ENCODE measurements at regions of chr16 and their contacts with region 1.

Region 1: DNA sequence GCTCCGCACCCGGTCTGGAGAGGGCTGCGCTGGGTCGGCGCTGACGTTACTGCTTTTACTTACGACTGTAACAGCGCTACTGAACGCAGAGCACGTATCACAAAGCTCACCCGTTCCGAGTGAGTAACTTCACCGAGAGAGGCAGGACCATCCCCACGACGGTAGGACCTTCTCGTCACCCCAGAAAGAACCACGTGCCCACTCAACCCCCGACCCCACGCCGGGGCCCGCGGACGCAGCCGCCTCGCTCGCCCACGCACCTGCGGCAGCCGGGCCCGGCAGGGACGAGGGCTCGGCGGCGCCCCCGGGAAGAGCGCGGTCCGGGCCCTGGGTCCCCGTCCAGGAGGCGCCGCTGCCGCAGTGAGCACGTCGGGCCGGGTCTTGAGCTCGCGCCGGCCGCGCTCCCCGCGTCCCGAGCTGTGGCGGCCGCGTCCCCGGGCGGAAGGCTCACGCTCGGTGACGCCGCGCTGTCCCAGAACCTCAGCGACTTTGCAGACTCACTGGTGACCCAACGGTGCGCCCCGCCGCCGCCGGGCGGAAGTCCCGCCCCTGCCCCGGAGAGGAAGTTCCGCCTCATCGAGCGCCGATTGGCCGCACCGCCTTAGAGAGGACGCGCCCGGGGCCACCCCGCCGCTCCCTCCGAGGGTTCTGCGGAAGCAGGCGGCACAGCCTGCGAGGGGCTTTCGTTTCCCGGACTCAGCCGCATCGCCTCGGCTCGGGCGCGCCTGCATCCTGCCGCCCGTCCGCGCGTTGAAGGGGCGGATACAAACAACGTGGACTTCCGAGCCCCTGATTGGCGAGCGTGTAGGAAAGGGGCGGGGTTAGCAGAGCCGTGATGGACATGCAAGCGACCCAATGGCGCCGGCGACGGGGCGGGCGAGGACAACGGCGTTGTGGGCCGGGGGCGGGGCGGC is 865 bp upstream of the RAB40C start:
- DNase-seq: peak; percentile 73 to 100
- H3K4me3 ChIP-seq: peak overlapping the region; percentile 90 to 94 (median 91)
- H3K27ac ChIP-seq: peak overlapping the region; percentile 99
- H3K4me1 ChIP-seq: peaks cover 0 to 20% (median 11%) of the 10 kb centered on the region in 4 experiments; a peak in 6 of 7 replicates
- H3K27me3 ChIP-seq: peaks cover 0 to 45% (median 29%) of the 10 kb centered on the region in 4 experiments; a peak in 5 of 7 replicates
- CTCF ChIP-seq: no peak
- EP300 ChIP-seq: no peak
- POLR2A ChIP-seq: peak in 1 of 2 experiments; percentile 55; a peak in 2 of 3 replicates
- RAD21 ChIP-seq: no peak

Region 2: DNA sequence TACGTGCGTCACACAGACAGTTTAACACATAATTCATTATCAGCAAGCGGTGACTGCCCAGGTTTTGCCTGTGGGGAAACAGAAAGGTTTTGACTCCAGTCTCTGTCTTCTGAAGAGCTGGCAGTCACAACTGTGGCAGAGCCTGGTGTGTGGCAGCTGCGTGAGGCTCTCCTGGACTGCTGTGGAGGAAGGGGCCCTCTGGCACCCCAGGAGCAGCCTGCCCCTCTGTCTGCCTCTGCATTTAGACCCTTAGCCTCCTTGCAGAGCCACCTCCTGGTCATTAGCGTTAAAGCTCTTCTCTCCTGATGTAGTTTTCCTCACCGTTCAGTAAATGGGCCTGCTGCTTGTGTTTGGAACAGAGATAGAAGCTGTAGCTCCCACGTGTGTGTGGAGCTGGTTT is 11.8 kb after region 1 on chr16:
- CTCF ChIA-PET with region 1: interaction called, 35 read pairs
- POLR2A ChIA-PET with region 1: interaction called, 8 read pairs
- DNase-seq: no peak
- H3K4me3 ChIP-seq: no peak overlapping the region
- H3K27ac ChIP-seq: no peak overlapping the region
- H3K4me1 ChIP-seq: peaks cover 0 to 2% (median 0%) of the 10 kb centered on the region in 4 experiments; a peak in 1 of 7 replicates
- H3K27me3 ChIP-seq: no peaks in the 10 kb centered on the region; a peak in 2 of 7 replicates
- CTCF ChIP-seq: peak; percentile 20 to 67 (median 54)
- EP300 ChIP-seq: no peak
- POLR2A ChIP-seq: no peak
- RAD21 ChIP-seq: peak; percentile 25 to 48; a peak in 3 of 4 replicates

Region 3: DNA sequence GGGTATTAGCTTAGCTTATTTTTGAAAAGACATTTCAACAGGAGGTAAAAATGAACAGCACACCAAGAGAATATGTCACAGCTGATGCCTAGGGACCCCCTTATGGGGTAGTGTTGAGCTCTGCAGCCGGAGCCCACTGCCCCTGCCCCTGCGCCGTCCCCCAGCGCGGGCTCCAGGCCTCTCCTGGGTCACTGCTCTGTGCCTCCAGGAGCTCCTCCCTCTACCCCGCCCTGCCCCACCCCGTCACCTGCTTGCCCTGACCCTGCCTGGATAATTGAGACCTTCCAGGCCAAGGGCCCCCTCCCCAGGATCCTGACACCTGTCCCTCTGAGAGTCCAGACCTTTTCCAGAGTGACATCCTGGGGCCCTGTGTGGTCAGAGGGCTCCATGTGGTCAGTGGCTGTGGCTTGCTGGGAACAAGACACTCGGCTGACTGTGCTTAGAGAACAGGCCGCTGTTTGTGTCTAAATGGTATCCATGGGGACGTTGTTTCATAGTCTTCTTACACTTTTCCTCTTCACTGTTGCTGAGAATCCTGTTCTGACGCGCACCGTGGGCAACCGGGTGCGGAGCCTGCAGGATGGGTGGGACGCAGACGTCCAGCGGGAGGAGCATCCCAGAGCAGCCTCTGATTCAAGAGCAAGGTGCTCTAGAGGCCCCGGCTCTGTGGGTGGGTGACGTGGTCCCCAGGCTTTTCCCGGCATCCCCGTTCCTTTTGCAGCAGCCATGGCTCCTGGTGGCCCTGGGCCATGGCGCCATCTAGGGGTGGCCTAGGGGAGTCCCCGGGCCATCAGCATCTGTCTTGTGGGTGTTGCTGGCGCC is 21.7 kb after region 1 on chr16:
- CTCF ChIA-PET with region 1: interaction called, 22 read pairs
- POLR2A ChIA-PET with region 1: interaction called, 4 read pairs
- DNase-seq: peak in 1 of 2 experiments; percentile 91
- H3K4me3 ChIP-seq: no peak overlapping the region
- H3K27ac ChIP-seq: no peak overlapping the region
- H3K4me1 ChIP-seq: no peaks in the 10 kb centered on the region; a peak in 1 of 7 replicates
- H3K27me3 ChIP-seq: no peaks in the 10 kb centered on the region
- CTCF ChIP-seq: peak; percentile 91 to 97 (median 92)
- EP300 ChIP-seq: no peak
- POLR2A ChIP-seq: no peak
- RAD21 ChIP-seq: peak; percentile 74 to 87

Region 4: GRCh38 chr16:648781-649589 is 60.0 kb after region 1 on chr16 and contains the start of gene WDR90:
- CTCF ChIA-PET with region 1: interaction called, 18 read pairs
- POLR2A ChIA-PET with region 1: interaction called, 3 read pairs
- DNase-seq: peak in 1 of 2 experiments; percentile 97
- H3K4me3 ChIP-seq: peak within 1 kb of the TSS; percentile 59 to 76 (median 68)
- H3K27ac ChIP-seq: peak within 1 kb of the TSS; percentile 35; the same call in 1 of the 2 replicates
- H3K4me1 ChIP-seq: peaks cover 0 to 4% (median under 1%) of the 10 kb centered on the region in 4 experiments; a peak in 4 of 7 replicates
- H3K27me3 ChIP-seq: no peaks in the 10 kb centered on the region
- CTCF ChIP-seq: no peak
- EP300 ChIP-seq: no peak
- POLR2A ChIP-seq: peak in 1 of 2 experiments; percentile 49; a peak in 1 of 3 replicates
- RAD21 ChIP-seq: no peak
- total RNA-seq, gene WDR90: 44.4 and 47.2 TPM in 2 replicates